PC-9 (cell line): ENCODE measurements at regions of chr6 and their contacts with region 1.

Region 1: DNA sequence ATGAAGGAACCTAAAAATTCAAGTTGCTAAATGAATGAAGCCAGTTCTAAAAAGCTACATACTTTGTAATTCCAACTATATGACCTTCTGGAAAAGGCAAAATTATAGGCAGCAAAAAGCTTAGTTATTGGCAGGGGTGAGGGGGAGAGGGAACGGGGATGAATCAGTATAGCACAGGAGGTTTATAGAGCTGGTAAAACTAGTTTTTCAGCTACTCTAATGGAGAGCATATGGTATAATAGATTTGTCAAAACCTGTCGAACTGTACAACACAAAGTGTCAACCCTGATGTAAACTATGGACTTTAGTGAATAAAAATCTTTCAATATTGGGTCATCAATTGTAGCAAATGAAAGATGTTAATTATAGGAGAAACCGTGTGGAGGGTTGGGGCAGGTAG is 18.7 kb downstream of the MANEA start:
- DNase-seq: peak; percentile 2 to 74
- H3K4me3 ChIP-seq: no peak overlapping the region
- H3K27ac ChIP-seq: no peak overlapping the region
- H3K4me1 ChIP-seq: peaks cover 11% of the 10 kb centered on the region
- H3K27me3 ChIP-seq: no peaks in the 10 kb centered on the region
- CTCF ChIP-seq: no peak

Region 2: GRCh38 chr6:95519228-95520037 is 76.6 kb before region 1 on chr6:
- CTCF ChIA-PET with region 1: no interaction called
- POLR2A ChIA-PET with region 1: interaction called, 19 read pairs
- intact Hi-C with region 1: no loop called
- DNase-seq: peak; percentile 69 to 83
- H3K4me3 ChIP-seq: peak overlapping the region; percentile 57; the same call in 1 of the 2 replicates
- H3K27ac ChIP-seq: 0 out of 2 replicates have a peak overlapping the region, but pooled peaks have one; percentile 27
- H3K4me1 ChIP-seq: peaks cover 5% of the 10 kb centered on the region; the same call in 1 of the 2 replicates
- H3K27me3 ChIP-seq: no peaks in the 10 kb centered on the region
- CTCF ChIP-seq: no peak